ENCODE measurements at regions of chr2 and their contacts with region 1.

Region 1: DNA sequence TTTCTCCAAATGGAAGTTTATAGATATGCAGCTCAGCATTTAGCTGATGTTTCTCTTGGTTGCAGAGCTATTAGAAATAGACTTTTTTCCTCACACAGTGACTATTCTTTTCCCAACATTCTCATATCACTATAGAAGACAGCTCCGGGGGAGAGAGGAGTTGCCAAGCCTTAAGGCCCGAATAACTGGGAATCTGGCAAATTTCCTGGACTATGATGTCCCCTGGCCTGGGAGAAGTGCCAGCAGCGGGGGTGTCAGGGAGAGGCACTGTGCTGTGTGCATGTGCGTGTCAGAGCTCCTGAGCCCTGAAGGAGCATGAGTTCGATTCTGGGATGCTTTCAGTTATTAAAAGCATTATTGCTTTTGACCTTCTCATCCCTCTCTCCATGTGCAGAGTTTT is 311.0 kb downstream of the PRKCE start:
- DNase-seq: peak; percentile 45
- H3K4me3 ChIP-seq: no peak overlapping the region
- H3K27ac ChIP-seq: no peak overlapping the region
- H3K4me1 ChIP-seq: peaks cover 22% of the 10 kb centered on the region
- H3K27me3 ChIP-seq: no peaks in the 10 kb centered on the region
- CTCF ChIP-seq: no peak

Region 2: GRCh38 chr2:45651415-45652089 is 311.0 kb before region 1 on chr2 and contains the start of gene PRKCE:
- CTCF ChIA-PET with region 1: interaction called, 12 read pairs
- POLR2A ChIA-PET with region 1: no interaction called
- intact Hi-C with region 1: no loop called
- DNase-seq: peak; percentile 40
- H3K4me3 ChIP-seq: peak within 1 kb of the TSS; percentile 73
- H3K27ac ChIP-seq: no peak within 1 kb of the TSS
- H3K4me1 ChIP-seq: peaks cover 19% of the 10 kb centered on the region
- H3K27me3 ChIP-seq: peaks cover 44% of the 10 kb centered on the region
- CTCF ChIP-seq: no peak
- total RNA-seq, gene PRKCE: 1.7 and 2.4 TPM in 2 replicates

Measured in A673 (cell line).